Astrocyte of the cerebellum (primary cell): ENCODE measurements at regions of chr11 and their contacts with region 1.

Region 1: DNA sequence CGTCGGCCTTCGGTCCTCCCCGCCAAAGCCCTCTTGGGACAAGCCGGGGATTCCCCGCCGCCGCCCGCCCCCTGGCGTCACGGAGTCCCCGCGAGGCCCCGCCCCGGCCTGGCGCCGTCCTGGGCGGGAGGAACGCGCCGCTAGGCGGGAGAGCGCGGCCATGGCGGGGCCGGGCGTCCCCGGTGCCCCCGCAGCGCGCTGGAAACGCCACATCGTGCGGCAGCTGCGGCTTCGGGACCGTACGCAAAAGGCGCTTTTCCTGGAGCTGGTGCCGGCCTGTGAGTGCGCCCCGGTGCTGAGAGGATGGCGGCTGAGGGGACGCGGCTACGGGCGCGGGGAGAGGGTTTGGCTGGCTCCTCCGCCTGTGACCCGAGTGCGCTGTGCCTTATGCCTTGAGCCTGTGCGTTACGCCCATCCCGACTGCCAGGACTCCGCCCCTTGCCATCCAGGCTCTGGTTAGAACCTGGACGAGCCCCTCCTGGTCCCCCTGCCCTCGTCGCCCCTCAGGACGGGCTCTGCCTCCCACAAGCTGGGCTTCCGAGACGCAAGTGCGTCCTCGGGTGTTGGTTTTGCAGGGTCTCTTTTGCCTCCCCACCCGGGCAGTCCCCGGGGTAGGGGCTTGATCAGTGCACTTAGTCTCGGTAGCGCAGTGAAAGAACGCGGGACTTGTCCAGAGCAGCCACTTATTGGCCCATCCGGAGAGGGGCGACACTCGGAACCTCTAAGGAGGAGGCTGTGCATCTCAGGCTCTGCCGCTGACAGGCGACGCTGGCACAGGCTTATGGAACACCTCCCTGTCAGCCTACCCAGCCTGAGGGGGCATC is at the start of gene ATG16L2:
- DNase-seq: no peak
- H3K4me3 ChIP-seq: peak within 1 kb of the TSS; percentile 73
- CTCF ChIP-seq: no peak

Region 2: GRCh38 chr11:72683782-72684200 is 130.7 kb before region 1 on chr11:
- in situ Hi-C with region 1: no loop called
- DNase-seq: no peak
- H3K4me3 ChIP-seq: no peak overlapping the region
- CTCF ChIP-seq: peak; percentile 93

Region 3: DNA sequence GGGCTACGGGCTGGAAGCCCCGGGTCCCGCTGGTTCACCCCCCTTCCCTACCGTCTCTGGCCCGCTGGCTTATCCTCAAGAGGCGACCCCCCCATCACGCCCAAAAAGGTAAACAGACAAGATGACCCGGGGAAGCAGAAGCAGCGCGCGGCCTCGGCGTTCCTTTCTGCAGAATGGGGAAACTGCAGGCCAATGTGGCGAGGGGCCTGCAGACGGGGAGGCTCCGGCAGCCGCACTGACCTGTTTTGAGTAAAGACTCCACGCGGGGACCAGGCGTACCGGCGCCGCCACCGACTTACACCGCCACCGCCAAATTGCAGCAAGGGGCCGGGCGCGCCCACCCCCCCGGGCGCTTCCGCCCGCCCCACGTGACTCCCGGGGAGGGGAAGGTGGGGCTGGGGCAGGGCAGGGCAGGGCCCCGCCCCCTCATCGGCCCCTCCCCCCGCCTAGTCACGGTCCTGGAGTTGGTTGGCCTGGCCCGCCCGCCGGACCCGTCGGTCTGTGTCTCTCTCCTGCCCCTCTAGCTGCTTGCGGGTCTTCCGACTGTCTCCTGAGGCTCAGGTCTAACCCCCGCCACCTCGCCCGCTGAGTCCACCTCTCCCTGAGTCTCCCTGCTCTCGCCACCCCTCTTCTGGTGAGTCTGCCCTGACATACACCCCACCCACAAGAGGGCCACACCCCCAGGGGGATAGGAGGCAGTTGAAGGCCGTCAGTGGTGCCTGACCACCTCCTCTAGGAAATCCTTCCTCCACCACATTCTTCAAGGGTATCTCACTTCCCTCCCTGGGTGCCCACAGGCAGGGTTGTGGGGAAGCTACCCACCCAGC is 62.2 kb before region 1 on chr11 and contains the start of gene ARAP1:
- in situ Hi-C with region 1: loop called (anchors 5 kb)
- DNase-seq: no peak
- H3K4me3 ChIP-seq: peak within 1 kb of the TSS; percentile 61
- CTCF ChIP-seq: no peak

Region 4: GRCh38 chr11:72864702-72865655 is 50.5 kb after region 1 on chr11:
- in situ Hi-C with region 1: no loop called
- DNase-seq: no peak
- H3K4me3 ChIP-seq: no peak overlapping the region
- CTCF ChIP-seq: no peak

Region 5: GRCh38 chr11:72896431-72896830 is 81.9 kb after region 1 on chr11:
- in situ Hi-C with region 1: no loop called
- DNase-seq: no peak
- H3K4me3 ChIP-seq: no peak overlapping the region
- CTCF ChIP-seq: no peak

Region 6: DNA sequence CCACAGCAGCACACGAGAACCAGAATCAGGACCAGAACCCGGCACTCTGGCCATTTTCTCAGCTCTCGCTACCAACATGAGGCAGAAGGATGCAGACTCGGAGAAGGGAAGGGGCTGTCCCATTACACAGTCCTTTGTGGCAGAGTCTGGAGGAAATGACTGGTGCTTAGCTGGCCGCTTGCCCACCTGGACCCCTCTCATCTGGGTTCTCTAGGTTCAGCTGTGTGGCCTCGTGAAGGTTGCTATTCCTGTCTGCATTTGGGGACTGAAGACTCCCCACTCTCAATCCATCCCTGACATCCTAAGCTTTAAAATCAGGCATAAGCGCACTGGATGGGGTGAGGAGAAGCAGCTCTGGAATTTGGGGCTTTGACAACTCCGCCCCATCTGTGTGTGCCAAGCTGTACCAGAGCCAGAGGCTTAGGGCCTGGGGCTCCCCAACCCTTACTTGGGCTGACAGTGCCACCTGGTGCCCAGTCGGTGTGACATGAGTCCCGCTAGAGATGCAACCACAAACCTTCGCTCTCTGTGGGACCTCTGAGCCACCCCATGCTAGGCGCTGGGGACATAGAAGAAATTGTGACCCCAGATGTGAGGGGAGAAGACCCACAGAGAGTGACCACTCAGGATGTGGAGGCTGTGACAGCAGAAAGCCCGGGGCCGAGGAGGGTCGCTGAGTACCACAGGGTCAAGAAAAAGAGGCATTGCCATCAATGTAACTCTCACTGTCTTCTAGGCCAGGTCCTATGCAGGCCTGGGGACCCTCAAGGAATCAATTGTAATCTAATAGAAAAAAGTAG is 363.5 kb after region 1 on chr11:
- in situ Hi-C with region 1: loop called (anchors 5 kb)
- DNase-seq: peak; percentile 67
- H3K4me3 ChIP-seq: no peak overlapping the region
- CTCF ChIP-seq: peak; percentile 74